Mammary epithelial cell (primary cell): ENCODE measurements at regions of chr17 and their contacts with region 1.

Region 1: GRCh38 chr17:50026901-50027630 is 28.8 kb upstream of the ITGA3 start:
- DNase-seq: peak; percentile 84
- H3K4me3 ChIP-seq: peak overlapping the region; percentile 28 to 50 (median 50)
- H3K27ac ChIP-seq: peak overlapping the region; percentile 94
- H3K4me1 ChIP-seq: peaks cover 29% of the 10 kb centered on the region
- H3K27me3 ChIP-seq: no peaks in the 10 kb centered on the region
- CTCF ChIP-seq: peak; percentile 95 to 97

Region 2: GRCh38 chr17:49887086-49888028 is 139.7 kb before region 1 on chr17:
- CTCF ChIA-PET with region 1: interaction called, 11 read pairs
- dilution Hi-C with region 1: no loop called
- in situ Hi-C with region 1: no loop called
- intact Hi-C with region 1: no loop called
- DNase-seq: peak; percentile 46
- H3K4me3 ChIP-seq: no peak overlapping the region
- H3K27ac ChIP-seq: no peak overlapping the region
- H3K4me1 ChIP-seq: peaks cover 11% of the 10 kb centered on the region
- H3K27me3 ChIP-seq: no peaks in the 10 kb centered on the region
- CTCF ChIP-seq: no peak

Region 3: GRCh38 chr17:49935526-49936210 is 91.4 kb before region 1 on chr17:
- CTCF ChIA-PET with region 1: no interaction called
- dilution Hi-C with region 1: no loop called
- in situ Hi-C with region 1: no loop called
- intact Hi-C with region 1: no loop called
- DNase-seq: no peak
- H3K4me3 ChIP-seq: no peak overlapping the region
- H3K27ac ChIP-seq: no peak overlapping the region
- H3K4me1 ChIP-seq: no peaks in the 10 kb centered on the region
- H3K27me3 ChIP-seq: peaks cover 4% of the 10 kb centered on the region
- CTCF ChIP-seq: no peak

Region 4: DNA sequence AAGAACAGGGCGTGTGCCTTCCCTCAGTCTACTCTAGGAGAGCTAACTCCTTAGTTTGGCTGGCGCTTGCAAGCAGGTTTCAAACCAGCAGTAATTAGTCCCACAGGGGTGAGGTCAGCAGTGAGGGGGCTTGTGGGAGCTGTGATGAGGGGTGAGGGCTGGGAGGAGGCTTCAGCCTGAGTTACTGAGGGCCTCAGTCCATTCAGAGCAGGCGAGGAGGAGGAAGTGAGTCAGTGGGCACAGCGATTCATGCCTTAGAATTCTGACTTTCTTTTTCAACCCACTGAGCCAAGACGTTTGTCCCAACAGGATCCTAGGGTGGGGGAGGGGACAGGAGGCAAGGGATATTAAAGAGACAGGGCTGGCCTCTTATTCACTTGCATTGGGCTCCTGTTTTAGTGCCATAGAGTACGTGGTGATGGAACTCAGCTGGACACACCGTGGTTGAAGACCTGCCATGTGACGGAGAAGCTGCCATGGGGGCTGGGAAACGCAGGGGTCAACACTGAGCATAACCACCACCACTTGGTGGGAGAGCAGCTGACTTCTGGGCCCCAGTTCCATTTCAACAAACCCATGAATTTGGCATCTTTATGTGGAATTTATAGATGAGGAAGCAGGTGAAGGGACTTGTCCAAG is 20.5 kb after region 1 on chr17:
- CTCF ChIA-PET with region 1: interaction called, 4 read pairs
- dilution Hi-C with region 1: no loop called
- in situ Hi-C with region 1: no loop called
- intact Hi-C with region 1: loop called (anchors 1 kb)
- DNase-seq: peak; percentile 90
- H3K4me3 ChIP-seq: no peak overlapping the region
- H3K27ac ChIP-seq: peak overlapping the region; percentile 72
- H3K4me1 ChIP-seq: peaks cover 92% of the 10 kb centered on the region
- H3K27me3 ChIP-seq: no peaks in the 10 kb centered on the region
- CTCF ChIP-seq: no peak

Region 5: GRCh38 chr17:50064258-50065001 is 37.4 kb after region 1 on chr17:
- CTCF ChIA-PET with region 1: interaction called, 24 read pairs
- dilution Hi-C with region 1: no loop called
- in situ Hi-C with region 1: loop called (anchors 5 kb)
- intact Hi-C with region 1: loop called (anchors 1 kb)
- DNase-seq: peak; percentile 96
- H3K4me3 ChIP-seq: no peak overlapping the region
- H3K27ac ChIP-seq: peak overlapping the region; percentile 73
- H3K4me1 ChIP-seq: peaks cover 66% of the 10 kb centered on the region
- H3K27me3 ChIP-seq: no peaks in the 10 kb centered on the region
- CTCF ChIP-seq: peak in 1 of 2 donors; percentile 4

Region 6: GRCh38 chr17:50094753-50095619 is 67.9 kb after region 1 on chr17 and contains the start of gene PDK2:
- CTCF ChIA-PET with region 1: interaction called, 4 read pairs
- dilution Hi-C with region 1: no loop called
- in situ Hi-C with region 1: no loop called
- intact Hi-C with region 1: loop called (anchors 2 kb)
- DNase-seq: peak; percentile 87
- H3K4me3 ChIP-seq: peak within 1 kb of the TSS in 2 of 3 experiments; percentile 13 to 54
- H3K27ac ChIP-seq: no peak within 1 kb of the TSS
- H3K4me1 ChIP-seq: peaks cover 9% of the 10 kb centered on the region
- H3K27me3 ChIP-seq: no peaks in the 10 kb centered on the region
- CTCF ChIP-seq: no peak
- total RNA-seq, gene PDK2: 18.2 to 24.8 TPM

Region 7: GRCh38 chr17:50213026-50214022 is 186.3 kb after region 1 on chr17:
- CTCF ChIA-PET with region 1: no interaction called
- dilution Hi-C with region 1: no loop called
- in situ Hi-C with region 1: no loop called
- intact Hi-C with region 1: no loop called
- DNase-seq: no peak
- H3K4me3 ChIP-seq: no peak overlapping the region
- H3K27ac ChIP-seq: no peak overlapping the region
- H3K4me1 ChIP-seq: peaks cover 20% of the 10 kb centered on the region
- H3K27me3 ChIP-seq: no peaks in the 10 kb centered on the region
- CTCF ChIP-seq: no peak